Activated CD8-positive, alpha-beta T cell treated with anti-CD3 and anti-CD28 coated beads, Interleukin-2, amount 10 ng/mL, durations not matched to agents 7 days and 5 days (primary cell): ENCODE measurements at regions of chr20 and their contacts with region 1.

Region 1: DNA sequence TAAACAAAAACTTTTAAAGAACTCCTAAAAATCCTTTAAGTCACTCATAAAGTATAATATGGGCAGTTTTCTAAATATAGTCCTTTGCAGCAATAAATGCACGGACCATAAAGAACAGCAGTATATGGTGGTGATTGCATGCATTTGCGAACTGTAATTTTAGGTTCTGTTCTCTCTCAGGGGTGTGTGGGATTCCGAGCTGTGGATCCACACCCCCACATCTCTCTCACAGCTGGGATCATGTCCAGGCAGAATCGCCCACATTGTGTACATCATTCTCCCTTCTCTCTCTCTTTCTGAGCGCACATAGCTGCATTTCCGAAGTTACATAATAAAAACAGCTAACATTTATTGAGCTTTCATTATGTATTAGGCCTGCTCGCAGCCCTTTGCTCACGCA is 28.6 kb downstream of the SLC52A3 start:
- DNase-seq: no peak
- ATAC-seq: no peak
- H3K4me3 Mint-ChIP-seq: no peak overlapping the region
- H3K27ac Mint-ChIP-seq: no peak overlapping the region
- H3K4me1 Mint-ChIP-seq: no peaks in the 10 kb centered on the region
- H3K27me3 Mint-ChIP-seq: peaks cover 2% of the 10 kb centered on the region

Region 2: GRCh38 chr20:561437-562231 is 178.1 kb before region 1 on chr20:
- CTCF ChIA-PET with region 1: interaction called, 11 read pairs
- POLR2A ChIA-PET with region 1: no interaction called
- DNase-seq: peak; percentile 67
- ATAC-seq: peak; percentile 77
- H3K4me3 Mint-ChIP-seq: no peak overlapping the region
- H3K27ac Mint-ChIP-seq: no peak overlapping the region
- H3K4me1 Mint-ChIP-seq: no peaks in the 10 kb centered on the region
- H3K27me3 Mint-ChIP-seq: peaks cover 8% of the 10 kb centered on the region